ENCODE measurements at regions of chr4 and their contacts with region 1.

Region 1: GRCh38 chr4:154506253-154506652 is 14.7 kb upstream of the DCHS2 start:
- DNase-seq: no peak
- ATAC-seq: no peak
- H3K4me3 Mint-ChIP-seq: no peak overlapping the region
- H3K27ac Mint-ChIP-seq: no peak overlapping the region
- H3K4me1 Mint-ChIP-seq: no peaks in the 10 kb centered on the region
- H3K27me3 Mint-ChIP-seq: peaks cover 24% of the 10 kb centered on the region
- CTCF ChIP-seq: peak; percentile 40

Region 2: DNA sequence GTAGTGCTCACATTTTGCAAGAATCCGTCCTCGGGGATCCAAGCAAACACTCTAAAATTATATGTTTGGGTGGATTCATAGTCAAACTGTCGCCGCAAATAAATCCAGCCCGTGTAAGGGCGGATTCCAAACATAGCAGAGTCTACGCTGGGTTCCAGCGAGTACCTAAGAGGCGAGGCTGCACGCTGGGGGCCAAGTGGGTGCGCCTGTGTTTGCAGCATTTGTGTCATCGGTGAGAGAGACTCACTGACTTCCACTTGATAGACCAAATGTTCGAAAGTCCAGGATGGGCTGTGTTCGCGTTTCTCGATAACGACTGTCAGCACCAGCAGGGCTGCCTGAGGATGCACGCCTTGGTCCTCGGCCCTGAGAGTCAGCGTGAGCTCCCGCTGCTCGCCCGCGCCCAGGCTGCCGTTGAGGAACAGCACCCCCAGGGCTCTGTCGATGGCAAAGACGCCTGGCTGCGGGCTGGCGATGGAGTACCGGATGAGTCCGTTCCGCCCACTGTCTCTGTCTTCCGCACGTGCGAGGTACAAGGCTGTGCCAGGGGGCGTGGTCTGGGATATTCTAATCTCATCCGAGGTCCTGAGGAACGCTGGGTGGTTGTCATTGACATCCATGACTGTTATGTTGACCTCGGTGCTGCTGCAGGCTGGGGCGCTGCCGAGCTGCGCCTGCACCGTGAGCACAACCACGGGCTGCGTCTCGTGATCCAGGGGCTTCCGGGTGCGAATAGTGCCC is 173.4 kb before region 1 on chr4:
- CTCF ChIA-PET with region 1: interaction called, 13 read pairs
- POLR2A ChIA-PET with region 1: no interaction called
- intact Hi-C with region 1: loop called (anchors 5 kb)
- DNase-seq: peak; percentile 77
- ATAC-seq: peak; percentile 91
- H3K4me3 Mint-ChIP-seq: peak overlapping the region; percentile 67
- H3K27ac Mint-ChIP-seq: no peak overlapping the region
- H3K4me1 Mint-ChIP-seq: peaks cover 10% of the 10 kb centered on the region
- H3K27me3 Mint-ChIP-seq: peaks cover 24% of the 10 kb centered on the region
- CTCF ChIP-seq: no peak

Region 3: DNA sequence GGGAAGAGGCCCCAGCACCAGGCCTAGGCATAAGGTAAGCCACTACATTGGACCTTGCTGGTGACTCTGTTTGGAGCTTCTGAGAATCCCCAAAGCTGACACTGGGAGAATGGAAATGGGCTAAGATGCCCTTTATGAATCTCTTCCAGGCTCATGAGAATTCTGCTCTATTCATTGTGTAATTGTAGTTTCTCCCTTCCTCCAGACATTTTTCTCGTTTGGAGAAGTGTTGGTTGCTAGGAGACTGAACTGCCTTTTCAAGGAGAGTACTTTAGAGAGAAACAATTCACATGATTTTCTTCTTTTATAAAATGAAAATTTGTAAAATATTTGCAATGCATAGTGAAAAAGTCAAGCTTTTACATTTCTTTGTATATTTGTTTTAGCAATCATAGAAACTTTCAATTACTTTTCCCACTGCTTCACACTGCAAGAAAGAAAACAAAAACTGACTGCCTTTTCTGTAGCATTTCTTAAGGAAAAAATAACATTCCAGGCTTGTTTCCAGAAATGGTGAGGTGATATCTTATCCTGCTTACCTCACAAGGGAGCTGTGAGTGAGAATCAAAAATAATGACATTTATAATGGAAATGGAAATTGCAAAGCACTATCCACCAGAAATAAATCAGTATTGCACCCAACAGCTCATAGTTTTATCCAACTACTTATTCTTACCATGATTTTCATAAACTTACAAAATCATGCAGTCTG is 10.2 kb after region 1 on chr4:
- CTCF ChIA-PET with region 1: interaction called, 14 read pairs
- POLR2A ChIA-PET with region 1: no interaction called
- intact Hi-C with region 1: no loop called
- DNase-seq: no peak
- ATAC-seq: no peak
- H3K4me3 Mint-ChIP-seq: no peak overlapping the region
- H3K27ac Mint-ChIP-seq: no peak overlapping the region
- H3K4me1 Mint-ChIP-seq: no peaks in the 10 kb centered on the region
- H3K27me3 Mint-ChIP-seq: peaks cover 32% of the 10 kb centered on the region
- CTCF ChIP-seq: no peak